SK-N-SH (cell line): ENCODE measurements at regions of chr16 and their contacts with region 1.

Region 1: GRCh38 chr16:72124761-72125634 is 31.4 kb downstream of the DHX38 start:
- DNase-seq: peak; percentile 80
- H3K4me3 ChIP-seq: no peak overlapping the region; a peak in 1 of 4 replicates
- H3K27ac ChIP-seq: no peak overlapping the region
- H3K4me1 ChIP-seq: peaks cover 0 to 7% of the 10 kb centered on the region in 2 experiments; a peak in 1 of 4 replicates
- H3K27me3 ChIP-seq: no peaks in the 10 kb centered on the region
- CTCF ChIP-seq: peak; percentile 78
- EP300 ChIP-seq: no peak
- RAD21 ChIP-seq: peak; percentile 91

Region 2: DNA sequence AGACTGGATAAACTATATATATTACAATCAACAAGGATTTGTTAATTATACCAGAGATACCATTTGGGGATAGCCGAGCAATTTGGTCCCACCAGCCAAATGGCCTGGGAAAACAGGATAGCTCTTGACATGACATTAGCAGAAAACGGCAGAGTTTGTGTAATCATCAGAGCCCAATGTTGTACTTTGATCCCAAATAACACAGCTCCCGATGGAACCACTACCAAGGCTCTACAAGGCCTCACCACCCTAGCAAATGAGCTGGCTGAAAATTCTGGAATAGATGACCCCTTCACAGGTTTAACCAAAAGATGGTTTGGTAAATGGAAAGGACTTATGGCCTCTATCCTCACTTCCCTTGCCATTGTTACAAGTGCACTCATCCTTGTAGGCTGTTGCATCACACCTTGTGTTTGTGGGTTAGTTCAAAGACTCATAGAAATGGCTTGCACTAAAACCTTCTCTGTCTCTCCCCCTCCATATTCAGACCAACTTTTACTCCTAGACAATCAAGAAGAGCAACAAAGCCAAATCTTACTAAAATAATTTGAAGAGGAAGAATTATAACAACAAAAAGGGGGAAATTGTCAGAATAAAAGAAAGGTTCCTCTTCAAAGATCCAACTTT is 41.1 kb before region 1 on chr16:
- CTCF ChIA-PET with region 1: no interaction called
- POLR2A ChIA-PET with region 1: no interaction called
- DNase-seq: no peak
- H3K4me3 ChIP-seq: no peak overlapping the region
- H3K27ac ChIP-seq: no peak overlapping the region
- H3K4me1 ChIP-seq: no peaks in the 10 kb centered on the region
- H3K27me3 ChIP-seq: no peaks in the 10 kb centered on the region
- CTCF ChIP-seq: no peak
- EP300 ChIP-seq: no peak
- RAD21 ChIP-seq: no peak

Region 3: DNA sequence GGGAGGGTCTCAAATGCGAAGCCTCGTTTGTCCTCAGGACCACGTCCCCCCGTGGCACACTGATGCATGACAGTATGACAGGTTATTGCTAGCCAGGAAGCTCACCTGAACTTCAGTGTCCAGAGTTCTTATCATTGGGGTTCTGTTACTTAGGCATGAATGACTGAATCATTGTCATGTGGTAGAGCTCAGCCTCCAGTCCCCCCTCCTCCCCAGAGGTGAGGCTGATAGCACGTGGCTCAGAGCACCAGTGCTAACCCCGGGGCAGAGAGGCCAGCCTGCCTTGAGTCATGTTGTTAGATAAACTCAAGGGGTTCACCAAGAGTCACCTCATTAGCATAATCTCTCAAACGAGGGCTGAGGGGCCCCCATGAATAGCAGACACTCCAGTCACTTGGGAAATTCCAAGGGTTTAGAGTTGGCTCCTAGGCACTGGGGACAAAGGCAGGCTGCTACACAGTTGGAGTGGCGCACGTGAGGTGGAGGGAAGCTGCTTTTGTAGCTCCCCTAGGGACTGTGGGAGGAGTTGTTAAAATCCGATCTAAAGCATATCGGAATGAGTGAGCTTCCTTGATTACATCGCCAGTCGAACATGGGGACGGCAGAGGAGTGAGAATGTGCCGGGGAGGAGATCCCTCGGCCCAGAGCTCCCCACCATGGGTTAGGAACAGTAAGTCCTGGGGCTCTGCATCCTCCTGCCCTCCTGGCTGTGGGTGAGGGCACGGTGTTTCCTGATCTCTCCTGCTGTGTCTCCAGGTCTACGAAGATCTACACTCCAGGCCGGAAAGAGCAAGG is 13.1 kb before region 1 on chr16:
- CTCF ChIA-PET with region 1: interaction called, 15 read pairs
- POLR2A ChIA-PET with region 1: interaction called, 4 read pairs
- DNase-seq: no peak
- H3K4me3 ChIP-seq: no peak overlapping the region
- H3K27ac ChIP-seq: no peak overlapping the region
- H3K4me1 ChIP-seq: no peaks in the 10 kb centered on the region
- H3K27me3 ChIP-seq: no peaks in the 10 kb centered on the region
- CTCF ChIP-seq: no peak
- EP300 ChIP-seq: no peak
- RAD21 ChIP-seq: no peak

Region 4: GRCh38 chr16:72137380-72138063 is 12.5 kb after region 1 on chr16:
- CTCF ChIA-PET with region 1: interaction called, 17 read pairs
- POLR2A ChIA-PET with region 1: no interaction called
- DNase-seq: no peak
- H3K4me3 ChIP-seq: no peak overlapping the region
- H3K27ac ChIP-seq: no peak overlapping the region
- H3K4me1 ChIP-seq: no peaks in the 10 kb centered on the region
- H3K27me3 ChIP-seq: no peaks in the 10 kb centered on the region
- CTCF ChIP-seq: no peak
- EP300 ChIP-seq: no peak
- RAD21 ChIP-seq: no peak

Region 5: GRCh38 chr16:72149676-72150464 is 24.9 kb after region 1 on chr16:
- CTCF ChIA-PET with region 1: interaction called, 11 read pairs
- POLR2A ChIA-PET with region 1: no interaction called
- DNase-seq: no peak
- H3K4me3 ChIP-seq: no peak overlapping the region
- H3K27ac ChIP-seq: no peak overlapping the region
- H3K4me1 ChIP-seq: no peaks in the 10 kb centered on the region
- H3K27me3 ChIP-seq: no peaks in the 10 kb centered on the region
- CTCF ChIP-seq: no peak
- EP300 ChIP-seq: no peak
- RAD21 ChIP-seq: no peak

Region 6: GRCh38 chr16:72198021-72198711 is 73.2 kb after region 1 on chr16:
- CTCF ChIA-PET with region 1: interaction called, 32 read pairs
- POLR2A ChIA-PET with region 1: interaction called, 7 read pairs
- DNase-seq: peak; percentile 68
- H3K4me3 ChIP-seq: peak overlapping the region in 1 of 2 experiments; percentile 25; a peak in 1 of 4 replicates
- H3K27ac ChIP-seq: peak overlapping the region; percentile 41 to 100; a peak in 3 of 4 replicates
- H3K4me1 ChIP-seq: peaks cover 4 to 45% of the 10 kb centered on the region in 2 experiments; a peak in 3 of 4 replicates
- H3K27me3 ChIP-seq: no peaks in the 10 kb centered on the region
- CTCF ChIP-seq: no peak
- EP300 ChIP-seq: peak in 1 of 2 experiments; percentile 95; a peak in 2 of 4 replicates
- RAD21 ChIP-seq: peak; percentile 37

Region 7: DNA sequence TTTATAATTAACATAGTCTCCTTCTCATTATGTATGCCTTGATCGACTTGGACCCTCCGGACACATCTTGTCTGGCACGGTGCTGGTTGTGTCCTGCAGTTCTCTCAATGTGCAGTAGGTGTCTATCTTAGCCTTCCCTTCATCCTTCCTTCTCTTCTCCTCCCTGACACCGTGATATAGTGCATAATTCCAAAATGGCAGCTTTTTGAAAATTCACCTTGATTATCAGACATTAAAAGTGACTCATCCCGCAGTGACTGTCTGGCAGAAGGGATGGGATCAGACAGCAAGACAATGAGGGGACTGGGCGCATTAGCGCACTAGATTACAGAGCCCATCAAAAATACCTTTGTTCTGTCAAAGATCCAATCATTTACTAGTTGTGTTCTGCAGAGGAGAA is 116.9 kb after region 1 on chr16:
- CTCF ChIA-PET with region 1: interaction called, 11 read pairs
- POLR2A ChIA-PET with region 1: no interaction called
- DNase-seq: peak; percentile 52
- H3K4me3 ChIP-seq: no peak overlapping the region
- H3K27ac ChIP-seq: peak overlapping the region in 1 of 2 experiments; percentile 76; a peak in 2 of 4 replicates
- H3K4me1 ChIP-seq: peaks cover 0 to 22% of the 10 kb centered on the region in 2 experiments; a peak in 2 of 4 replicates
- H3K27me3 ChIP-seq: no peaks in the 10 kb centered on the region
- CTCF ChIP-seq: peak; percentile 91
- EP300 ChIP-seq: no peak
- RAD21 ChIP-seq: peak; percentile 96

Region 8: DNA sequence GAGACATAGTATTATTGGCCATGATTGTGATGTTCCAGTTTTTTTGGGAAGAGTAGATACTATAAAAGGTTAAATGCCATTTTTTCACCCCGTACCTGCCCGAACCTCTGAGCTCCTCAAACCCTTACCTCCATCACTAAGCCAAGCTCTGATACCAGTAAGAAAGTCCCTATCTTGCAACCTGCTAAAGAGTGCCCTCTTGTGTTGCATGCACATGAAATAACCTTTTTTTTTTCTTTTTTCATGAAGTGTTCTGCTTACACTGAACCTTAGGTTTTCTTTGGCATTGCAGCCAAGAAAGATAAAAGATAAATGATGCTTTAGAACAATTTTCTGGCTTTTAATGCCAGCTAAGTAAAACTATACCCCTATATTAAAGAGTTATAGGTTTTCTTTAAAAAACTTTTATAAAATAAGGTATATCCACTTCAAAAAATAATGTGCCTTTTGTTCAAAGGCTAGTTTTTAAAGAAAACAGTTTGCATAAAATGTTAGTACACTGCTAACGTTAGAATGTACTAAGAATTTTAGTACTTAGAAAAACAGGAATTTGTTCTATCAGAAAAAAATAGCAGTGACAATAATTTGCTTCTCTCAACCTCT is 342.3 kb after region 1 on chr16:
- CTCF ChIA-PET with region 1: interaction called, 57 read pairs
- POLR2A ChIA-PET with region 1: no interaction called
- DNase-seq: peak; percentile 37
- H3K4me3 ChIP-seq: no peak overlapping the region; a peak in 1 of 4 replicates
- H3K27ac ChIP-seq: no peak overlapping the region
- H3K4me1 ChIP-seq: no peaks in the 10 kb centered on the region; a peak in 1 of 4 replicates
- H3K27me3 ChIP-seq: no peaks in the 10 kb centered on the region
- CTCF ChIP-seq: peak; percentile 77
- EP300 ChIP-seq: no peak
- RAD21 ChIP-seq: peak; percentile 85